Posterior vena cava (tissue), 2 donors: ENCODE measurements at regions of chr16 and their contacts with region 1.

Region 1: DNA sequence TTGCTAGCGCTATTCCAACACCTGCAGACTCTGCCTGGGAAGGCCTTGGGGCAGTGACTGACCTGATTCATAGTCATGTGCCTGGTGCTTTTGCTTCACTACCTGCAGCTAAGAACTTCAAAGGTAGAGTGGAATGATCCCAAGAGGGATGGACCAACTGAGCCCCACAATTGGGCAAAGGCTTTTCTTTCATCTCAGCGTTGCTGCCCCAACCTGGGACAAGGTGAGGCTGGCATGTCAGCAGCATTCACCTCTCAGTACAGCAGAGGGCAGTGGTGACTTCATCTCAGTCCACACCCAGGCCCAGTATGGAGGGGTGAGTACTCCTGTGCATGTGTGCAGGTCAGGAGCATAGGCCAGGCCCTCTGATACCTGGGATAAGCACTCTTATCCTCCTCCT is 149.6 kb upstream of the GNAO1 start:
- DNase-seq: no peak

Region 2: DNA sequence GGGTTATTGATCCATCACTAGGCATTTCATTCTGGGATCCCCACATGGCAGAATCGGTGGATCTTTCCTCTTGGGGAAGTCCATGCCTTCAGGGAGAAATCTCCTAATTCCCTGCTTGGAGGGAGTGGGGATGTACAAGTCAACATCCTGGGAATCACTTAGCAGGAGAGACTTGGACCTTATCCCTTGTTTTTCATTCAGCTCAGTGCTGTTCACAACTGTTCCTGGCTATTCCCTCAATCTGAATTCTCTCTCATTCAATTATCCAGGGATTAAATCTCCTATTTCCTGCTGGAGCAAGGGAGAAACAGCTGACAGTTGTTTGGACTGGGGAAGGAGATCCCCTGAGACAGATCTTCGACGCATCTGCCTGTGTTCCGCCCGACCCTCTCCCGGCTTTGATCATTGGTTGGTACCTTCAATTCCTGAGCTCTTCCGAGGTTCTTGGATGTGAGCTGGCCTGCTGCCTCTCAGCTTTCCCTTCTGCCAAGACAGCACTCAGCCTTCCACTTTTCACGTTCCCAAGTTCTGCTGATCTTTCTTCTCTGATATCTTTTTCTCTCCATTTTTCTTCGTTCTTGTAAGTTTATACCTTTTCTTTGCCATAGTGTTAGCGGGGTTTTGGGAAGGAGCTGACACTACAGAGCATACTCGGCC is 34.2 kb after region 1 on chr16:
- intact Hi-C with region 1: loop called in 1 of 2 experiments (anchors 1 kb)
- DNase-seq: no peak